ENCODE measurements at regions of chr9 and their contacts with region 1.

Region 1: GRCh38 chr9:112793213-112793810 is 42.8 kb downstream of the SNX30 start:
- DNase-seq: peak; percentile 57
- ATAC-seq: peak; percentile 99
- H3K4me3 ChIP-seq: no peak overlapping the region
- H3K27ac ChIP-seq: no peak overlapping the region
- H3K4me1 ChIP-seq: no peaks in the 10 kb centered on the region
- H3K27me3 ChIP-seq: no peaks in the 10 kb centered on the region
- CTCF ChIP-seq: peak; percentile 96
- EP300 ChIP-seq: no peak
- POLR2A ChIP-seq: no peak
- RAD21 ChIP-seq: peak; percentile 89

Region 2: GRCh38 chr9:112443200-112443599 is 350.1 kb before region 1 on chr9:
- CTCF ChIA-PET with region 1: no interaction called
- POLR2A ChIA-PET with region 1: no interaction called
- in situ Hi-C with region 1: no loop called
- intact Hi-C with region 1: loop called (anchors 10 kb)
- DNase-seq: peak; percentile 16
- ATAC-seq: peak; percentile 42; the same call in 1 of the 3 replicates
- H3K4me3 ChIP-seq: no peak overlapping the region
- H3K27ac ChIP-seq: no peak overlapping the region
- H3K4me1 ChIP-seq: peaks cover 10% of the 10 kb centered on the region; the same call in 1 of the 2 replicates
- H3K27me3 ChIP-seq: no peaks in the 10 kb centered on the region
- CTCF ChIP-seq: peak; percentile 41
- EP300 ChIP-seq: no peak
- POLR2A ChIP-seq: no peak
- RAD21 ChIP-seq: no peak

Region 3: DNA sequence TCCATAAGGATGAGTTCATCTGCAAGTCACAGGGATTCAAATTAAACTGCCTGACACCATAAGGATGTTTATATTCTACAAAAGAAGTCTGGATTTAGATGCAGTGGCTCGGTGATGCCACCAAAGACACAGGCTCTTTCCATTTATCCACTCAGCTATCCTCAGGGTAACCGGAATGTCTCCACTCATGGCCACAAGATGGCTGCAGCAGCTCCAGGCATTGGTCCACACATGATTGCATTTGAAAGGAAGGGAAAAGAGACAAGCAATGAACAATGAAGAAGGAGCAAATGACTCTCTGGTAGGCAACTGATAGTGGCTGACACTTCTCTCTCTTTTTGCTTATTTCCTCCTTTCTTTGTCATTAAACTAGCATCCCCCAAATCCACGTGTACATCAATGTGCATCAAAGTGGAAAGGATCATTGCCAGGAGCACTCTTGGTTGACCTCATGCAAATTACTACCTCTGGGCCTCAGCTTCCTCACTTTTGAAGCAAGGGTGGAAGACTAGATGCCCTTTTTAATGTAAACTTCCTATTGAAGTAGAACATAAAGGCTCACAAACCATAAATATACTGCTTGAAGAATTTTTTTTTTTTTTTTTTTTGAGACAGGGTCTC is 50.0 kb before region 1 on chr9:
- CTCF ChIA-PET with region 1: interaction called, 8 read pairs
- POLR2A ChIA-PET with region 1: no interaction called
- in situ Hi-C with region 1: loop called (anchors 10 kb)
- intact Hi-C with region 1: loop called (anchors 1 kb)
- DNase-seq: no peak
- ATAC-seq: peak; percentile 56; the same call in 2 of the 3 replicates
- H3K4me3 ChIP-seq: no peak overlapping the region
- H3K27ac ChIP-seq: no peak overlapping the region
- H3K4me1 ChIP-seq: peaks cover 25% of the 10 kb centered on the region
- H3K27me3 ChIP-seq: no peaks in the 10 kb centered on the region
- CTCF ChIP-seq: peak; percentile 62
- EP300 ChIP-seq: no peak
- POLR2A ChIP-seq: no peak
- RAD21 ChIP-seq: no peak

Region 4: GRCh38 chr9:112750111-112750767 is 43.1 kb before region 1 on chr9 and contains the start of gene SNX30:
- CTCF ChIA-PET with region 1: no interaction called
- POLR2A ChIA-PET with region 1: interaction called, 3 read pairs
- in situ Hi-C with region 1: loop called (anchors 10 kb)
- intact Hi-C with region 1: loop called (anchors 1 kb)
- DNase-seq: peak; percentile 79
- ATAC-seq: peak; percentile 79
- H3K4me3 ChIP-seq: peak within 1 kb of the TSS; percentile 86 to 97 (median 89)
- H3K27ac ChIP-seq: peak within 1 kb of the TSS; percentile 89
- H3K4me1 ChIP-seq: peaks cover 76% of the 10 kb centered on the region
- H3K27me3 ChIP-seq: no peaks in the 10 kb centered on the region; a peak in 1 of 5 replicates
- CTCF ChIP-seq: peak; percentile 60
- EP300 ChIP-seq: no peak
- POLR2A ChIP-seq: peak; percentile 92 to 93
- RAD21 ChIP-seq: no peak; the same call in 1 of the 2 replicates
- total RNA-seq, gene SNX30: 12.4 and 18.9 TPM in 2 replicates